IMR-90 (cell line): ENCODE measurements at regions of chr6 and their contacts with region 1.

Region 1: GRCh38 chr6:139375232-139376016 is 976 bp upstream of the CITED2 start:
- DNase-seq: peak; percentile 98
- ATAC-seq: peak; percentile 61
- H3K4me3 ChIP-seq: peak overlapping the region; percentile 69
- H3K27ac ChIP-seq: peak overlapping the region; percentile 91
- H3K4me1 ChIP-seq: peaks cover 8% of the 10 kb centered on the region
- H3K27me3 ChIP-seq: no peaks in the 10 kb centered on the region
- CTCF ChIP-seq: peak; percentile 37
- POLR2A ChIP-seq: peak; percentile 59
- RAD21 ChIP-seq: peak; percentile 57

Region 2: DNA sequence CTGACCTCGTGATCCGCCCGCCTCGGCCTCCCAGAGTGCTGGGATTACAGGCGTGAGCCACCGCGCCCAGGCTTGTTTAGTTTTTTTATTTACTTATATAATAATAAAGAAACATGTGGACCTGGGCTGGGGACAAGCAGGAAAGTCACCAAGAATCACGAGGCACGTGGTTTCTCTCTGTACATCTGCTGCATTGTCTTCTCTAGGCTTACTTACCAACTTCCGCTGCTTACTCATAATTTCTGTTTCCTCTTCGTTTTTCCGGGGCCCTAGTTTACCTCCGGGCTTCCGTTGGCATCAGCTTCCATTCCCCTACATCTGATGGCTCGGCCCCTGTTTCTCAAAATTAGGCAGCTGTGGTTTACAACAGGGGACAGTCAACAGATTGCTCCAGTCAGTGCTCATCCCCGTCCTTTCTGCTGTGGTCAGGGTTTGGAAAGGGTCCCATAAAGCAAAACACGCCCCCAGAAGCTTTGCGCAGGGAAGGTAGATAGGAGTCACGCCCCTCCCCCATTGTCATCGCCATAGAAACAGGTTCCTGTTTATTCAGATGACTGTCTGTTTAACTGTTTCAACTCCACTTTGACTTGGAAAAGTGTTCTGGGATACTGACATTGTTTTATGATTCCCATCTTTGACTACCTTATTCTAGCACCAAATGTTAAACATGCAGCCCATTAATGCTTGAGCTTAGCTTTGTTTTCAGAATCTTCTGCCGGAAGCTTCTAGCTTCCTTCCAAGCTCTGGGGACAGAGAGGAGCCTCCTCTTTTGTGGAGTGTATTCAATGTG is 51.7 kb before region 1 on chr6:
- CTCF ChIA-PET with region 1: no interaction called
- POLR2A ChIA-PET with region 1: no interaction called
- dilution Hi-C with region 1: no loop called
- in situ Hi-C with region 1: no loop called
- intact Hi-C with region 1: no loop called
- DNase-seq: peak; percentile 75
- ATAC-seq: peak; percentile 77
- H3K4me3 ChIP-seq: no peak overlapping the region
- H3K27ac ChIP-seq: peak overlapping the region; percentile 12
- H3K4me1 ChIP-seq: peaks cover 3% of the 10 kb centered on the region; the same call in 1 of the 2 replicates
- H3K27me3 ChIP-seq: no peaks in the 10 kb centered on the region
- CTCF ChIP-seq: no peak
- POLR2A ChIP-seq: no peak
- RAD21 ChIP-seq: no peak

Region 3: GRCh38 chr6:139355172-139355571 is 20.3 kb before region 1 on chr6:
- CTCF ChIA-PET with region 1: no interaction called
- POLR2A ChIA-PET with region 1: no interaction called
- dilution Hi-C with region 1: no loop called
- in situ Hi-C with region 1: no loop called
- intact Hi-C with region 1: no loop called
- DNase-seq: no peak
- ATAC-seq: no peak
- H3K4me3 ChIP-seq: no peak overlapping the region
- H3K27ac ChIP-seq: no peak overlapping the region
- H3K4me1 ChIP-seq: no peaks in the 10 kb centered on the region
- H3K27me3 ChIP-seq: no peaks in the 10 kb centered on the region; the same call in 1 of the 2 replicates
- CTCF ChIP-seq: no peak
- POLR2A ChIP-seq: no peak
- RAD21 ChIP-seq: no peak

Region 4: GRCh38 chr6:139539852-139540251 is 164.4 kb after region 1 on chr6:
- CTCF ChIA-PET with region 1: no interaction called
- POLR2A ChIA-PET with region 1: interaction called, 9 read pairs
- dilution Hi-C with region 1: no loop called
- in situ Hi-C with region 1: no loop called
- intact Hi-C with region 1: loop called (anchors 2 kb)
- DNase-seq: peak; percentile 98
- ATAC-seq: peak; percentile 97
- H3K4me3 ChIP-seq: no peak overlapping the region
- H3K27ac ChIP-seq: peak overlapping the region; percentile 86
- H3K4me1 ChIP-seq: peaks cover 8% of the 10 kb centered on the region
- H3K27me3 ChIP-seq: no peaks in the 10 kb centered on the region
- CTCF ChIP-seq: no peak
- POLR2A ChIP-seq: no peak
- RAD21 ChIP-seq: peak; percentile 7; the same call in 1 of the 2 replicates

Region 5: GRCh38 chr6:139753198-139753861 is 377.9 kb after region 1 on chr6:
- CTCF ChIA-PET with region 1: no interaction called
- POLR2A ChIA-PET with region 1: interaction called, 3 read pairs
- dilution Hi-C with region 1: no loop called
- in situ Hi-C with region 1: no loop called
- intact Hi-C with region 1: loop called (anchors 2 kb)
- DNase-seq: peak; percentile 77
- ATAC-seq: peak; percentile 75
- H3K4me3 ChIP-seq: no peak overlapping the region
- H3K27ac ChIP-seq: 0 out of 2 replicates have a peak overlapping the region, but pooled peaks have one; percentile 29
- H3K4me1 ChIP-seq: peaks cover 12% of the 10 kb centered on the region
- H3K27me3 ChIP-seq: no peaks in the 10 kb centered on the region
- CTCF ChIP-seq: no peak
- POLR2A ChIP-seq: no peak
- RAD21 ChIP-seq: no peak

Region 6: GRCh38 chr6:139981768-139982181 is 606.4 kb after region 1 on chr6:
- CTCF ChIA-PET with region 1: no interaction called
- POLR2A ChIA-PET with region 1: interaction called, 3 read pairs
- dilution Hi-C with region 1: no loop called
- in situ Hi-C with region 1: no loop called
- intact Hi-C with region 1: loop called (anchors 2 kb)
- DNase-seq: peak; percentile 80
- ATAC-seq: peak; percentile 62
- H3K4me3 ChIP-seq: no peak overlapping the region
- H3K27ac ChIP-seq: peak overlapping the region; percentile 49; the same call in 1 of the 2 replicates
- H3K4me1 ChIP-seq: peaks cover 29% of the 10 kb centered on the region
- H3K27me3 ChIP-seq: no peaks in the 10 kb centered on the region
- CTCF ChIP-seq: no peak
- POLR2A ChIP-seq: no peak
- RAD21 ChIP-seq: no peak

Region 7: DNA sequence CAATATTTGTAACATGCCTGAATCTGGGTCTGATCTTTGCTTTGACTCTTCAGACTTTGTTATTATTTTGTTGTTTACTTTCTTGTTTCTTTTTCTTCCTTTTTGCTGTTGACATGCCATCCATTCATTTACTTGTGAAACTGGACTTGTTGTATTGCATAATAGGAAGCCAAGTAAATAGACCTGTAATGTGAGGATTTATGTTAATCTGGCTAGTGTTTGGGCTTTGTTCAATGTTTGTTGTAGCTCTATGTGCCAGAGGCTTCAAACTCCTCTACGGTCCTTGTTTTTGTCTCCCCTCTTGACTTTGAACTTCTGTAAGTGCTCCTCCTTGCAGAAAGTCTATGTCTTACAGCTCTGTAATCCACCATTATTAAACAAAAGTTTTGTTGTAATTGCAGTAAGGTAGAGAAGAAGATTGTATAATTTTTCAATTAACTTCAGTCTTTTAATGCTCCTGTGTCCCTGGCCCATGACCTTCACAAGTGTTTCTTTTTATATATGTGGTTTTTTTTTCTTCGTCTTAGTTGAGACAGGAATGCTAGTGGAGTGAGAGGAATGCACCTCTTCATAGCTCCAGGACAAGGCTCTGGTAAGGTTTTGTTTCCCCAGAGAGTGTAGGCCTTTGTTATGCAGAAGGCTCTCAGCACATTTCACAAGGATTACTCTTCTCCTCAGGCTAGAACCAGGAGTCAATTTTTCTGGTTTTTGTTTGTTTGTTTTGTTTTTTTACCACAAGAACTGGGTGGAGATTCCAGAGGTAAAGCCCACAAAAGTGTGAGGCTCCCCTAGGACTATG is 1060.8 kb after region 1 on chr6:
- CTCF ChIA-PET with region 1: no interaction called
- POLR2A ChIA-PET with region 1: no interaction called
- dilution Hi-C with region 1: no loop called
- in situ Hi-C with region 1: loop called (anchors 10 kb)
- intact Hi-C with region 1: loop called (anchors 2 kb)
- DNase-seq: peak; percentile 67
- ATAC-seq: peak; percentile 71
- H3K4me3 ChIP-seq: no peak overlapping the region
- H3K27ac ChIP-seq: peak overlapping the region; percentile 64; the same call in 1 of the 2 replicates
- H3K4me1 ChIP-seq: peaks cover 13% of the 10 kb centered on the region; the same call in 1 of the 2 replicates
- H3K27me3 ChIP-seq: no peaks in the 10 kb centered on the region
- CTCF ChIP-seq: no peak
- POLR2A ChIP-seq: no peak
- RAD21 ChIP-seq: no peak

Region 8: GRCh38 chr6:140921366-140922226 is 1546.2 kb after region 1 on chr6:
- CTCF ChIA-PET with region 1: no interaction called
- POLR2A ChIA-PET with region 1: no interaction called
- dilution Hi-C with region 1: no loop called
- in situ Hi-C with region 1: loop called (anchors 25 kb)
- intact Hi-C with region 1: loop called (anchors 1 kb)
- DNase-seq: peak; percentile 86
- ATAC-seq: peak; percentile 77
- H3K4me3 ChIP-seq: no peak overlapping the region
- H3K27ac ChIP-seq: no peak overlapping the region
- H3K4me1 ChIP-seq: no peaks in the 10 kb centered on the region; the same call in 1 of the 2 replicates
- H3K27me3 ChIP-seq: no peaks in the 10 kb centered on the region
- CTCF ChIP-seq: peak; percentile 87
- POLR2A ChIP-seq: peak; percentile 34; the same call in 1 of the 2 replicates
- RAD21 ChIP-seq: peak; percentile 94